ENCODE measurements at regions of chr12 and their contacts with region 1.

Region 1: GRCh38 chr12:43805860-43806736 is at the start of gene TWF1:
- DNase-seq: no peak
- H3K4me3 ChIP-seq: peak within 1 kb of the TSS; percentile 86 to 96
- H3K27ac ChIP-seq: peak within 1 kb of the TSS; percentile 89
- H3K4me1 ChIP-seq: peaks cover 29% of the 10 kb centered on the region
- H3K27me3 ChIP-seq: no peaks in the 10 kb centered on the region
- CTCF ChIP-seq: peak in 2 of 3 experiments; percentile 17 to 20
- POLR2A ChIP-seq: peak in 1 of 2 donors; percentile 43
- total RNA-seq, gene TWF1: 71.0 TPM

Region 2: DNA sequence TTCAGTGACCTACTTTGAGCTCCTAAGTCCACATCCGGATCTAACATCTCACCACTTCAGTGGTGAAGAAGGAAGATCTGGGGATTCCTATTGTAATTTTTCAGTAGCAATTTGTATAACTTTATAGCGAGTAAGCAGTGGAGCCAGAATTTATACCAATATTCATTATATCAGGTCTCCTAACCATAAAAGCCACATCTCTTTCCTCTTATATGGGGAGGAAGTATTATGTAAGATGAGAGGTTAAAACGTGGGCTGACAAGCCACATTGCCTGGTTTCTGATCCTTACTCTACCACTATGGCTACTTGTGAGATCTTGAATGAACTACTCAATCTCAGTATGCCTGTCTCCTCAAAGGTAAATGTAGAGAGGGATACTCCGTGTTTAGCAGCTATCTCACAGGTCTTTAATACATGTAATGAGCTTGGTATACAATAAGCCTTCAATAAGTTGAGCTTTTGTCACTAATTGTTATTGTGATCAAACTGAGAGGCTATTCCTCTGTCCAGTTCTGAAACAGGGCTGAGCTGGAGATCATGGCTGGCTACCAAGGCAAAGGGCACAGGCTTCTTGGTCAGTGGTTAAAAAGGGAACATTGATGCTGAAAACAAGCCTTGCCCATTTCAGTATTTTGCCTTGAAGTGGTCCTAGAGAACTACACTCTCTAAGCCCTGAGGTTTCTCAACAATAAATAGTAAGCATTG is 26.5 kb after region 1 on chr12:
- intact Hi-C with region 1: loop called (anchors 2 kb)
- DNase-seq: no peak
- H3K4me3 ChIP-seq: no peak overlapping the region
- H3K27ac ChIP-seq: no peak overlapping the region
- H3K4me1 ChIP-seq: peaks cover 29% of the 10 kb centered on the region
- H3K27me3 ChIP-seq: peaks cover 4% of the 10 kb centered on the region
- CTCF ChIP-seq: no peak
- POLR2A ChIP-seq: no peak

Region 3: GRCh38 chr12:44031472-44032185 is 225.5 kb after region 1 on chr12:
- intact Hi-C with region 1: no loop called
- DNase-seq: no peak
- H3K4me3 ChIP-seq: no peak overlapping the region
- H3K27ac ChIP-seq: no peak overlapping the region
- H3K4me1 ChIP-seq: no peaks in the 10 kb centered on the region
- H3K27me3 ChIP-seq: no peaks in the 10 kb centered on the region
- CTCF ChIP-seq: no peak
- POLR2A ChIP-seq: no peak

Region 4: GRCh38 chr12:44076871-44077270 is 270.8 kb after region 1 on chr12:
- intact Hi-C with region 1: no loop called
- DNase-seq: no peak
- H3K4me3 ChIP-seq: no peak overlapping the region
- H3K27ac ChIP-seq: no peak overlapping the region
- H3K4me1 ChIP-seq: peaks cover 10% of the 10 kb centered on the region
- H3K27me3 ChIP-seq: no peaks in the 10 kb centered on the region
- CTCF ChIP-seq: no peak
- POLR2A ChIP-seq: no peak

Measured in vagina (tissue), 2 donors.